ENCODE measurements at regions of chr7 and their contacts with region 1.

Region 1: DNA sequence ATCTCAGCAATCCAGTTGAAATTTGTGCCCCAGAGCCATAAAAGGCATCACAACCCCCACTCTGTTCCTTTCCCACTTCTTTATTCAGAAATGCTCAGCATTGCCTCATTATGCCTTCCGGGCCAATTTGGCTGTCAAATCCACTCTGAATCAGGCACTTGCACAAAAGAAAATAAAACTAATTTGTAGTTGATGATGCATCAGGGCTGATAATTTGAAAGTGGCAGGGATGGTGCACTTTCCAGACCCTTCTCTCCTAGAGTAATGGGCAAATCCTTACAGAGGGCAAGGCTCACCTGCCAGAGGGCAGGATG is 147.9 kb upstream of the PDE1C start:
- ATAC-seq: peak in 2 of 8 experiments; percentile 64 to 67
- H3K4me3 ChIP-seq: no peak overlapping the region
- H3K27ac ChIP-seq: no peak overlapping the region
- H3K4me1 ChIP-seq: peaks cover 0 to 7% of the 10 kb centered on the region in 2 donors

Region 2: DNA sequence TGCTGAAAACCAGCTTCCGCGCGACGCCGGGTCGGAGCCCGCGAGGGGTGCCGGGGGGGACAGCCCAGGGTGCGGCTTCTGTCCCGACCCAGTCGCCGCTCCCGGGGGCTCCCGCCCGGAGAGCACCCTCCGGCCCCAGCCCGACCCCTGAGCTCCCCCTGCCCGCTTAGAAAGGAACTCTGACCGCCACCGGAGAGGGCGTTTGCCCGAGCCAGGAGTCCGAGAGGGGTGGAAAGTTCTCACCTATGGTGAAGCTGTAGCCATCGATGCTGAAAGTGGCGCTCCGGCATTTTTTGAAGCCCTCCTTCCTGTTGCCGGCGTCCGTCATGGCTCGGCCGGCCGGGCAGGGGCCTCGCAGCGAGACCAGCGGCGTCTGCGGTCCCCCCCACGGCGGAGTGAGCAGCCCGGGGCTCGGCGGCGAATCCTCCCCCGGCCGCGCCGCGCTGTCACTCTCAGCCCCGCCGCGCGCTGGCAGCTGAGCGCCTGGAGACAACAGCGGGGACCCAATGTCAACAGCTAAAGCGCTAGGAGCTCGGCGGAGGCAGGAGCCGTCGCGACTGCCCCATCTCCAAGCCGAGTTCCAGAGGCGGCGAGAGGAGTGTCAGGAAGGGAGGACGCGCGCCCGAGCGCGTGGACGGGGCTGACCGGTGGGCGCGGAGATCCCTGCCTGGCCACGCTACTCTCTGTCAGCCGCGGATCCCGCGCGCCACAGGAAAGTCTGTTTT is 80.5 kb after region 1 on chr7:
- in situ Hi-C with region 1: loop called in 1 of 9 experiments (anchors 10 kb)
- ATAC-seq: peak; percentile 65 to 87 (median 84)
- H3K4me3 ChIP-seq: peak overlapping the region; percentile 36 to 43 (median 40)
- H3K27ac ChIP-seq: no peak overlapping the region
- H3K4me1 ChIP-seq: peaks cover 3 to 5% of the 10 kb centered on the region in 2 donors

Region 3: DNA sequence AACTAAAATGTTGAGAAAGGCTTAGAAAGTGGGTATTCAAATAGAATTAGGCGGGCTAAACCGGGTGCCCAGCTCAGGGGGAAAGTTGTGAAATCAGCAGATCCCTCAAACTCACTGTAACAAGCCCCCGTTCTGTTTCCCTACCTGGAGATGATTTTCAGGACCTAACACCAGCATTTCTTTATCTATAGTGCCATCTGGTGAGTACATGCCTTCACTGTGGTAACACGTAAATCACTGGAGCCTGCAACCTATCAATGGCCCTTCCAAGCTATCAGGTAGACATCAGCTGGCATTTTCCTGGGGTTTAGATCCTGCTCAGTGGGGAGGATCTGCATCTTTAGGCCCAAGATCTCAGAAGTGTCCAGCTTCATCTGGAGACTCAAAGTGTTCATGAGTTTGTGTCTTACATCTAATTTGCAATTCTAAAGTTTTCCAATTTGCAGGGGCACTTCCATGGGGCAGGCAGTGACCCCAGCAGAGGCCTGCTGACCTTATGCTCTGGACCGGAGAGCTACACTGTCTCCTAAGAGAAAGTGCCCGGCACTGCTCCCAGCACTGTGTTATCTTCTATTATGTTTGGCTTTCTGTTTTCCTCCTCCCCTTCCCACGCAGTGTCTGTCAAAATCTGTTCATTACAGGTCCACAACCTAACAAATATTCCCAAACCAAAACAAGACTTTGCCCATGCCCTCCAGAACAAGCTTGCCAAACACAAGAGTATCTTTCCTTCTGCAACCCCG is 139.6 kb after region 1 on chr7:
- in situ Hi-C with region 1: loop called in 4 of 9 experiments (anchors 10 to 25 kb)
- ATAC-seq: peak in 3 of 8 experiments; percentile 72 to 84 (median 76)
- H3K4me3 ChIP-seq: no peak overlapping the region
- H3K27ac ChIP-seq: no peak overlapping the region
- H3K4me1 ChIP-seq: peaks cover 0 to 4% of the 10 kb centered on the region in 2 donors

Region 4: GRCh38 chr7:32479574-32480200 is 261.6 kb after region 1 on chr7:
- in situ Hi-C with region 1: loop called in 3 of 9 experiments (anchors 10 to 25 kb)
- ATAC-seq: peak in 3 of 8 experiments; percentile 21 to 38 (median 33)
- H3K4me3 ChIP-seq: no peak overlapping the region
- H3K27ac ChIP-seq: no peak overlapping the region
- H3K4me1 ChIP-seq: peaks cover 0 to 5% of the 10 kb centered on the region in 2 donors